ENCODE measurements at regions of chr4 and their contacts with region 1.

Region 1: GRCh38 chr4:119615068-119615719 is 13.4 kb downstream of the PDE5A start:
- DNase-seq: no peak
- H3K4me3 ChIP-seq: no peak overlapping the region
- H3K27ac ChIP-seq: no peak overlapping the region
- H3K4me1 ChIP-seq: no peaks in the 10 kb centered on the region
- H3K27me3 ChIP-seq: no peaks in the 10 kb centered on the region
- CTCF ChIP-seq: no peak

Region 2: DNA sequence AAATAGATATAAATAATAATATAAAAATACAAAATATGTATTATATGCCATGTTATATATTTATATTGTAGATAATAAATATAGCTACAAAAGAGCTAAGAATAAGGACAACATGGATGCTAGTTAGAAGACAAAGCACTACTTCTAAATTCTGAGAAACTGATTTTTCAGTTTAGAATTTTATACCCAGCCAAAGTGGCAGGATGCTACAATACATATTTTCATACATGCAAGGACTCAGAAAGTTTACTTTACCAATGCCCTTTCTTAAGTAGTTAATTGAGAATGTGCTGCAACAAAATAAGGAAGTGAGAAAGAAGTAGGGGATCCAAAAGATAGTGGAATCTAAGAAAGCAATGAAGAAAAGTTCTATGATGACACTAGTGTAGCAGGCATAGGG is 51.1 kb before region 1 on chr4:
- intact Hi-C with region 1: loop called (anchors 10 kb)
- DNase-seq: no peak
- H3K4me3 ChIP-seq: no peak overlapping the region
- H3K27ac ChIP-seq: no peak overlapping the region
- H3K4me1 ChIP-seq: no peaks in the 10 kb centered on the region
- H3K27me3 ChIP-seq: no peaks in the 10 kb centered on the region
- CTCF ChIP-seq: no peak

Measured in left ventricle myocardium inferior (tissue), 1 donor.